ENCODE measurements at regions of chr5 and their contacts with region 1.

Region 1: GRCh38 chr5:55146543-55147151 is 13.3 kb upstream of the GPX8 start:
- DNase-seq: peak; percentile 63 to 94

Region 2: GRCh38 chr5:54944364-54944763 is 202.3 kb before region 1 on chr5:
- in situ Hi-C with region 1: loop called (anchors 25 kb)
- DNase-seq: peak; percentile 42 to 58

Measured in T47D (cell line).